Stomach (tissue), 19 donors: ENCODE measurements at regions of chr4 and their contacts with region 1.

Region 1: DNA sequence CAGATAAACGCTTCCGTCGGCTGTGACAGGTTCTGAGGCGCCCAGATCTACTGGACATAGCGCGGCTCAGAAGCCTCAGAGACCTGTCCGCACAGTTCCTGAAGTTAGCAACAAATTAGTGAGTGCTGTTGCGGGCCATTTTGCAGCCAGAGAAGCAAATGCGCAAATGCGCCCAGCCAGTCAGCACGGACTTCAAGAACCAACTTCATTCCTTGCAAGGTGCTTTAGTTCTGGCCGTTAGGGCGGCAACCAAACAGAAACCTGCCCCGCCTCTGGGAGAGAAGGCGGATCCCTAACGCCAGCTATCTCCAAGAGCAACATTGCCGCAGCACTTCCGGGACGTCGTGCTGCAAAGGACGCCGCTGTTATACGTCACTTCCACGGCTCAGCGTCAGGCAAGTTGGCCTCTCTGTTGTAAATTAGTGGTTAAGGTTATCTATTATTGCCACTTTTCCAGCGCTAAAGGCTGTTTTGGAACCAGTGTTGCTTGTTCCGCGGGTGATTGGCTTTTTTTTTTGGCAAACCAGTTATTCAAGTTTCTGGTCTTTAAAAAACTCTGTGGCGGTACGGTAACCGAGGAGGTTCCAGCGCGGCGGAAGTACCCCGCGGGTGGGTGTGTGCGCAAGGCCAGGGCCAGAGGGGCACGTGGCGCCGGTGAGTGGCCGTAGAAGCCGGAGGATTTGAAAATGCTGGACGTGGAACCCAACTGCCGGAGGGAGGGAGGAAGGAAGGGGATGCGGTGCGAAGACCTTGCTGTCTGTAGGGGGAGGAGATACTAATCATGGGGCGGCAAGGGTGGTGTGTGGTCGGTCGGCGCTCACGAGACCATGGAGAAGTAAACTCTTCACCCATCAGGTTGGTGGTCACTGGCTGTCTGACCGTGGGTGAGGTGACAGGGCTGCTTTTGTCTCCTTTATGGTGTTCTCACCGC is at the start of gene GAR1:
- DNase-seq: peak; percentile 92 to 98
- H3K4me3 ChIP-seq: peak within 1 kb of the TSS; percentile 70 to 87 (median 76)
- H3K27ac ChIP-seq: peak within 1 kb of the TSS; percentile 72 to 91 (median 87)
- H3K4me1 ChIP-seq: peaks cover 17 to 26% (median 21%) of the 10 kb centered on the region in 4 donors
- H3K27me3 ChIP-seq: no peaks in the 10 kb centered on the region
- CTCF ChIP-seq: no peak
- EP300 ChIP-seq: peak; percentile 26
- POLR2A ChIP-seq: peak in 1 of 4 donors; percentile 29
- total RNA-seq, gene GAR1: 2.2 to 9.4 (median 3.8) TPM in 3 of 5 donors, not detected in the others

Region 2: GRCh38 chr4:109114501-109114900 is 700.9 kb before region 1 on chr4:
- intact Hi-C with region 1: no loop called
- DNase-seq: no peak
- H3K4me3 ChIP-seq: no peak overlapping the region
- H3K27ac ChIP-seq: no peak overlapping the region
- H3K4me1 ChIP-seq: no peaks in the 10 kb centered on the region
- H3K27me3 ChIP-seq: no peaks in the 10 kb centered on the region
- CTCF ChIP-seq: no peak
- EP300 ChIP-seq: no peak
- POLR2A ChIP-seq: no peak

Region 3: DNA sequence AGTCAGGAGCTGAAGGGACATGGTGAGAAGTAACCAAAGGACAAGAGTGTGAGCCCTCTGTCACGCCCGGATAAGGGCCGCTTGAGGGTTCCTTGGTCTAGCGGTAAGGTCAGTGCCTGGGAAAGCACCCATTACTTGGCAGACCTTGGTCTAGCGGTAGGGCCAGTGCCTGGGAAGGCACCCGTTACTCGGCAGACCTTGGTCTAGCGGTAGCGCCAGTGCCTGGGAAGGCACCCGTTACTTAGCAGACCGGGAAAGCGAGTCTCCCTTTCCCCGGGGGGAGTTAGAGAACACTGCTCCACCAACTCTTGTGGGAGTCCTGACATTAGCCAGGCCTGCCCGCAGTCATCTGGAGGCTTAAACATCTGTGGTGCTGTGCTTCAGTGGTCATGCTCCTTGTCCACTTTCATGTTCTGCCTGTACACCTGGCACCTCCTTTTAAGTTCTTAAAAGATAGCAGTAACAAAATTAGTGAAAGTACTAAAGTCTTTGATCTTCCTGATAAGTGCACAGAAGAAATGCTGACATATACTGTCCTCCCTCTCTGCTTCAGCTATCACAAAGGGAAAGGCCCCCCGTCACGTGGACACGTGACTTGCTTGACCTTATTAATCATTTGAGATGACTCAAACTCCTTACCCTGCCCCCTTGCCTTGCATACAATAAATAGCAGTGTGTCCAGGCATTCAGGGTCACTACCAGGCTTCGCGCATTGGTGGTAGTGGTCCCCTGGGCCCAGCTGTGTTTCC is 391.1 kb before region 1 on chr4:
- intact Hi-C with region 1: loop called (anchors 5 kb)
- DNase-seq: no peak
- H3K4me3 ChIP-seq: no peak overlapping the region
- H3K27ac ChIP-seq: no peak overlapping the region
- H3K4me1 ChIP-seq: peaks cover 0 to 7% (median 2%) of the 10 kb centered on the region in 4 donors
- H3K27me3 ChIP-seq: no peaks in the 10 kb centered on the region
- CTCF ChIP-seq: no peak
- EP300 ChIP-seq: no peak
- POLR2A ChIP-seq: no peak

Region 4: GRCh38 chr4:109690690-109691410 is 124.6 kb before region 1 on chr4:
- intact Hi-C with region 1: loop called (anchors 10 kb)
- DNase-seq: no peak
- H3K4me3 ChIP-seq: no peak overlapping the region
- H3K27ac ChIP-seq: no peak overlapping the region
- H3K4me1 ChIP-seq: no peaks in the 10 kb centered on the region
- H3K27me3 ChIP-seq: no peaks in the 10 kb centered on the region
- CTCF ChIP-seq: no peak
- EP300 ChIP-seq: no peak
- POLR2A ChIP-seq: no peak

Region 5: DNA sequence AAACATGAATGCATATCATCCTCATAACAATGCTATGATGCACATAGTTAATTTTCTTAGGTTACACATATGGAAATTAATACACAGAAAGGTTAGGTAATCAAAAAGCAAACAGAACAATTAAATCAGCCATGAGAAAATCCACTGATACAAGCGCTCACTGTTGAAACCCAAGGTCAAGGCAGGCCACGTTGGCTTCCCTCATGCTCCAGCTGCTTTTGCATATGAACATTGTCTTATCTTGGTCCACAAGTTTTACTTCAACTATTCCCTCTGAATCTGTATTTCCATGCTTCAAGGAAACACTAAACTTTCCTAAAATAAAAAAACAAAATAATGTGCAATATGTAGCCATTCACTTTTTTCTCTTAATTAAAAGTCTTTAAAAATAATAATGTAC is 51.0 kb before region 1 on chr4:
- intact Hi-C with region 1: no loop called
- DNase-seq: peak in 1 of 2 donors; percentile 13
- H3K4me3 ChIP-seq: no peak overlapping the region
- H3K27ac ChIP-seq: no peak overlapping the region
- H3K4me1 ChIP-seq: no peaks in the 10 kb centered on the region
- H3K27me3 ChIP-seq: peaks cover 0 to 2% (median 0%) of the 10 kb centered on the region in 3 donors
- CTCF ChIP-seq: no peak
- EP300 ChIP-seq: no peak
- POLR2A ChIP-seq: no peak

Region 6: DNA sequence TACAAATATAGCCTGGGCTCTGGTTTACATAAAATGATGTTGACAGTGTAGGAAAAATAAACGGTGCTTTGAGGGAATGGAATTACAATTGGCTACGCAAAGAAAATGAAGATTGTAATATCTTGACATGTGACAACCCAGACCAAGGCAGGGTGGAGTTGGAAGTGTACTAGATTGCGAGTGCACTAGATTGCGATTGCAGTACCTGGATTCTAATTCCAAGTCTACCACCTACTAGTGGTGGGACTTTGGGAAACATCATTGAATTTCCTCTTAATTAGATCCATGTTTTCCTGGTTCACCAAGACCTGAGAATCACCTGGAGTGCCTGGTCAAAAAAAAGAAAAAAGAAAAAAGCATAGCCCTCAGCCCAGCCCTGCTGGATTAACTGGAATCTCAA is 115.9 kb after region 1 on chr4:
- intact Hi-C with region 1: no loop called
- DNase-seq: no peak
- H3K4me3 ChIP-seq: no peak overlapping the region
- H3K27ac ChIP-seq: no peak overlapping the region
- H3K4me1 ChIP-seq: no peaks in the 10 kb centered on the region
- H3K27me3 ChIP-seq: no peaks in the 10 kb centered on the region
- CTCF ChIP-seq: no peak
- EP300 ChIP-seq: no peak
- POLR2A ChIP-seq: no peak